GM10248 (cell line): ENCODE measurements at regions of chr13 and their contacts with region 1.

Region 1: GRCh38 chr13:49996951-49997895 is at the start of gene TRIM13:
- DNase-seq: peak; percentile 76
- CTCF ChIP-seq: peak; percentile 76

Region 2: GRCh38 chr13:49278211-49278610 is 719.0 kb before region 1 on chr13:
- CTCF ChIA-PET with region 1: no interaction called
- POLR2A ChIA-PET with region 1: no interaction called
- DNase-seq: no peak
- CTCF ChIP-seq: no peak

Region 3: DNA sequence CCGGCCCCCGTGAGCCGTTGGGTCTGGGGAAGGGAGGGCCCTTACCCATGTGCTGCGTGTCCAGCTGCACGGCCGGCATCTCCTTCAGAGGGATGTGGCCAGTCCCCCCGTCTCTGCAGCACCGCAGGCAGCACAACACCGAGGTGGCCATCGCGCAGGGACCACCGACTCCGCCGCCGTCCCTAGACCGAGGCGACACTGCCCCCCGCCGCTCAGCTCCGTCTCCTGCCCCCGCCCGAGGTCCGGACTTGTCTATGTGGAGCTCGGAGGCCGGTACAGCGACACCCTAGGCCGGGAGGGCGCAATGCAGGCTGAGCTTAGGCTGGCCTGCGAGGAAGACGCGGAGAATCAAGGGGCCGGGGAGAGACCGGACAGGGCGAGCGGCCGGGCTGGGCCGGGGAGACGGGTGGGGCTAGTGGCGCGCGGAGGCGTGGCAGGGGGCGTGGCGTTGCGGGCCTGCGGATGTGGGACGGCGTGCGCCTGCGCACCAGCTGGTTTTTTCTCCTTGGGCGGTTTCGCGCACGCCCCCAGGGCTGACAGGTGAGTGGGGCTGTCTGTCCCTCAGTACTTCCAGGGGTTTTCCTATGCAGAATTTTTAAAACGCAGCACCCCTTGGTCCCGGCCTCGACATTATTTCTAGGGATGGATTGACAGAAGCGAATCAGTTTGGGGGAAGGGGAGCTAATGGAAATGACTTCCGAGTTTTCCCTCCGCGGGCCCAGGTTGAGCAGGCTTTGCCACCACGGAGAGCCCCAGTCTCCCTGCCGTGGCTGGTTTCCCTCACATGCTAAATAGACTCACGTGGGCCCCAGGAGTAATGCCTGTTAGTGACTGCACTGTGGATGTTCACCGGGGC is 60.9 kb before region 1 on chr13 and contains the start of gene SPRYD7:
- CTCF ChIA-PET with region 1: interaction called, 10 read pairs
- POLR2A ChIA-PET with region 1: no interaction called
- DNase-seq: peak; percentile 96
- CTCF ChIP-seq: peak; percentile 100

Region 4: GRCh38 chr13:49985129-49985528 is 12.1 kb before region 1 on chr13:
- CTCF ChIA-PET with region 1: interaction called, 18 read pairs
- POLR2A ChIA-PET with region 1: no interaction called
- DNase-seq: no peak
- CTCF ChIP-seq: no peak

Region 5: DNA sequence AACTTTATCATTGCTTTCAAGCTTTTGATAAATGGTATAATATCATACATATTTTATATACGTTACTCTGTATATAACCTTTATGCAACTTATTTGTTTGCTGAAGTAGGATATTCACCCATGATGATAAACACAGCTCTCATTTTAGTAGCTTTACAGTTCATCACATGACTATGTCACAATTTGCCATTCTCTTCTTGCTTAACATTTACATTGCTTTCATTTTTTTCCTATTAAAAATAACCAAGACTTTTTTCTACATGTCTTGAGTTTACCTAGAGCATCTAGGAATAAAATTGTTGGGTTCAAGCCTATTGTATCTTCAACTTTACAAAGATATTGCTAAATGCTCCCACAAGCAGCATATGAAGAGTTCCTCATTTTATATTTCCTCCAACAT is 72.0 kb after region 1 on chr13:
- CTCF ChIA-PET with region 1: interaction called, 13 read pairs
- POLR2A ChIA-PET with region 1: no interaction called
- DNase-seq: no peak
- CTCF ChIP-seq: no peak

Region 6: GRCh38 chr13:50081679-50082425 is 84.6 kb after region 1 on chr13:
- CTCF ChIA-PET with region 1: interaction called, 27 read pairs
- POLR2A ChIA-PET with region 1: interaction called, 4 read pairs
- DNase-seq: peak; percentile 94
- CTCF ChIP-seq: peak; percentile 3

Region 7: GRCh38 chr13:50244713-50245574 is 247.7 kb after region 1 on chr13:
- CTCF ChIA-PET with region 1: no interaction called
- POLR2A ChIA-PET with region 1: no interaction called
- DNase-seq: peak; percentile 54
- CTCF ChIP-seq: no peak